ENCODE measurements at regions of chr20 and their contacts with region 1.

Region 1: DNA sequence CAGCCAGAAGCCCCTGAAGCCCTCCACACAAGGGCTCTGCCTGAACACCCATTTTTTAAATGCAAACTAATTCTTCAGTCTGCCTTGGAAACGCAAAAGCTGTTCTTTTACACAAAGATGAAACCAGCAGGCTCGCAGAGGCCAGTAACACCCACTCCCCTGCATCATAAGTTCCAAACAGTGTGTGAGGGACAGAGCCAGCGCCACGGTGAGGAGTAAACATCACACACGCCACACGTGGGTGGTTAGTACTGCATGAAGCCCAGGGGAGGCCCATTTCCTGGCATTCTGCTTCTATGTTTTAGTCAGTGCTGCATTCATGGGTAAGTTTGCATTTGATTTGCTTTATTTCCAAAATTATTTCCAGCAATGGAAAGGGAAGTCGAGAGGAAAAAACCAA is 217.7 kb upstream of the RIN2 start:
- DNase-seq: no peak
- ATAC-seq: no peak
- H3K4me3 ChIP-seq: no peak overlapping the region
- H3K27ac ChIP-seq: no peak overlapping the region
- H3K4me1 ChIP-seq: peaks cover 16 to 18% of the 10 kb centered on the region in 2 donors
- H3K27me3 ChIP-seq: no peaks in the 10 kb centered on the region
- CTCF ChIP-seq: no peak
- POLR2A ChIP-seq: no peak

Region 2: DNA sequence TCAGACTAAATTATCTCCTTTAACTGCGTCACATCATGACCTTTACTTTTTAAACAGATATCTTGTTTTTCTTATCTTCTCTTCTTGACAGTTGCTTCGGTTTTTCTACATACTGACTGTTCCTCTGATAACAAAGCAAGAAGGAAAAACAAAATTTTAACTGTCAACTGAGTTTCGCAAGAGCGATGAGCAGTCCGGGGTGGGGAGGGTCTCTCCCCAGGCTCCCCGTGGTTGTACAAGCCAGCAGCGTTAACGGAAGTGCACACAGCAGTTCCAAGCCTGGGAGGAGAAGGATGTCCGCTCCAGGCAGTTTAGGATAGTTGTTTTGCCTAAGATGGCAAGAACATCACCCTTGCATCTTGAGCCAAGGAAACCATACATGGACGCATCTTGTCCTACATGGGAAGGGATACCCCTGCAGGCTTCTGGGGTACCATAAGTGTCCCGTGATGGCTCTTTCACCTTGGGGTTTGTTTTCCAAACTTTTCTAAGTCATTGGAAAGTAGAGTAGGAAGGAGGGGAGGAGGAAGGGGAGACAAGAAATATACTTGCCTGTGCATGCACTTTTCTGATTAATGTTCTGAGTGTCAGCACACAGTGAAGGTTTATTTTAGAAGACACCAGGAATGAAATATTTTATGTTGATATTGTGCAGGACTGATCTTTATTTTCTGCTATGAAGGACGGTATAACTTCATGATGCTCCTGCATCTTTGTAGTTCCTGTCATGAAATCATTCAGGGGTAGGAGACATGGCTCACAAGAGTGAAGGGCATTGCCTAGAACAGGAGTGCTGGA is 307.2 kb before region 1 on chr20:
- in situ Hi-C with region 1: no loop called
- intact Hi-C with region 1: no loop called
- DNase-seq: no peak
- ATAC-seq: no peak
- H3K4me3 ChIP-seq: no peak overlapping the region
- H3K27ac ChIP-seq: no peak overlapping the region
- H3K4me1 ChIP-seq: peaks cover 0 to 2% of the 10 kb centered on the region in 2 donors
- H3K27me3 ChIP-seq: no peaks in the 10 kb centered on the region
- CTCF ChIP-seq: no peak
- POLR2A ChIP-seq: no peak

Region 3: DNA sequence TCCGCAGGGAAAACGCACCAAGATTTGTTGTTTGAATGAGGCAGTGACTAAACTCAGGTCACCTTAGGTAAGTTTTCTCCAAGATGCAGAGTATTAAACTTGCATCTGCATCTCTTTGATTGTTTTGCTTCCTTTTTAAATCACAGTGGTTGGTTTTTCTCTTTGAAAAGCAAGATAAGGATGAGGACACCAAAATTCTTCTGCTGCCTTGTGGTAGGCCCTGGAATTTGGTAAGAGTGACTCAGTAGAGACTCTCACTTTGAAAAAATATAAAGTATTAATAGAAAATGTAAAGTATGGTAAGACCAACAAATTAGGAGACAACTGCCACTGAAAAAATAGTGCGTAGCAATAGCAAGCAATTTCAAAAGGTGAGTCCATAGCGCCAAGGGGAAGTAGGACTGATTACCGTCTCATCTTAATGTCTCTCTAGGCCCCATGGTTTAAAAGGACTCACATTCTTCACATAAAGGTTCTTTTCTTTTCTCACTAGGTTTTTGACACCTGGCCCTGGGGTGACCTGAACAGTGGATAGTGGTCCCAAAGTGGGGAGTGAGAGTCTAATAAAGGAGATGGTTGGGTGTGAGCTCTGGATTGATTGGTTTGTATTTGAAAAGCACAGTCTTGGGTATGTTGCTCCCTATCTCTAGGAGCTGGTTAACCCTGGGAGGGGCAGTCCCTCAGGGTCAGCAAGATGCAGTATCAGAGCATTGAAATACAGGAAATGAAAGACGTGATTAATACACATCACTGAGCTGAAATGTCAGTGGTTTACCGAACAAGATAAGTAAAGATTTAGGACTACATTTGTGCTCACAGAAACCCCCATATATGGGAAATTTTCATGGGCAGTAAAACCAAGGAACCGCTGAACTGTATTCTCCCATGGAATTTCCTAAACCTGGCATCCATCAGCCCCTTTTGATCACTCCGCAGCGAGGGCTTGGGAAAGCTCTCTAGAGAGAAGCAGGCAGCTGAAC is 106.7 kb before region 1 on chr20:
- in situ Hi-C with region 1: loop called in 2 of 4 experiments (anchors 25 kb)
- intact Hi-C with region 1: no loop called
- DNase-seq: no peak
- ATAC-seq: no peak
- H3K4me3 ChIP-seq: no peak overlapping the region
- H3K27ac ChIP-seq: no peak overlapping the region
- H3K4me1 ChIP-seq: peaks cover 14 to 30% of the 10 kb centered on the region in 2 donors
- H3K27me3 ChIP-seq: no peaks in the 10 kb centered on the region
- CTCF ChIP-seq: no peak
- POLR2A ChIP-seq: no peak

Measured in gastrocnemius medialis (tissue), 4 donors.